ENCODE measurements at regions of chr6 and their contacts with region 1.

Region 1: DNA sequence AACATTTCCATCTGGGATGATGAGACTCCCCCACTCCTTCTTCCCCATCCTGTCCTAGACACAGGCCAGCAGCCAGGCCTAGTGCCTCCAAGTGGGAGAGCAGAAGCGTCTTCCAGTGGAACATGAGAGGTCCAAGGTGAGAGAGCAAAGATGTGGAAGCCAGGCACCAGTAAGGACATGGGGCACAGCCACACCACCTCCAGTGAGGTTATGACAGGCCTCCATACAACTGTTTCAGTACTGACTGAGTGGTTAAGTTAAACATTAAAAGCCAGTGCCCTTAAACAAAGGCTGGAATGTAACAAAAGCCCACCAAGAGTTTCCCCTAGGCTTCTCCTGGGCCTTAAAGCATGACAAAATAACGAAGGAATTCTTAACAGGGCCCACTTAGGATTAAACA is 5.3 kb downstream of the ZBTB24 start:
- DNase-seq: no peak
- H3K4me3 ChIP-seq: peak overlapping the region; percentile 96
- H3K27ac ChIP-seq: no peak overlapping the region
- H3K4me1 ChIP-seq: peaks cover 74% of the 10 kb centered on the region
- CTCF ChIP-seq: no peak

Region 2: DNA sequence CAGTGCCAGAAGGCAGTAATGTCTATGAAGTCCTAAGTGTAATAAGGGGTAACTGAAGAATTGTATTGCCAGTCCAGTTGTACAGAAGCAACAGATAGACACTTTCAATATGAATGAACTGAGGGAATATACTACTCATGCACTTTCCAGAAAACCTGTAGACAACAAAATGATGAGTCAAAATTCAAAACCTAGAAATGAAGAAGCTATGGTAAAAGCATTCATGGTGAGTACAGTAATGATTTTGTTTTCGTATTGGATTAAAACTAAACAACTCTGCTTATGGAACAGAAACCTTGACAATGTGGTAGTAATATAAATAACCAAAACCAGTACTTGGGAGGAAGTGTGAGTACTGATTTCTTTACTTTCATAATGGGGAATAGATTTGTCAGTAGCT is 594.6 kb before region 1 on chr6:
- CTCF ChIA-PET with region 1: no interaction called
- POLR2A ChIA-PET with region 1: no interaction called
- intact Hi-C with region 1: no loop called
- DNase-seq: no peak
- H3K4me3 ChIP-seq: no peak overlapping the region
- H3K27ac ChIP-seq: no peak overlapping the region
- H3K4me1 ChIP-seq: peaks cover 20% of the 10 kb centered on the region
- CTCF ChIP-seq: no peak

Region 3: GRCh38 chr6:109009236-109009961 is 468.3 kb before region 1 on chr6:
- CTCF ChIA-PET with region 1: no interaction called
- POLR2A ChIA-PET with region 1: no interaction called
- intact Hi-C with region 1: no loop called
- DNase-seq: peak; percentile 92
- H3K4me3 ChIP-seq: peak overlapping the region; percentile 87
- H3K27ac ChIP-seq: no peak overlapping the region
- H3K4me1 ChIP-seq: peaks cover 36% of the 10 kb centered on the region
- CTCF ChIP-seq: no peak

Region 4: DNA sequence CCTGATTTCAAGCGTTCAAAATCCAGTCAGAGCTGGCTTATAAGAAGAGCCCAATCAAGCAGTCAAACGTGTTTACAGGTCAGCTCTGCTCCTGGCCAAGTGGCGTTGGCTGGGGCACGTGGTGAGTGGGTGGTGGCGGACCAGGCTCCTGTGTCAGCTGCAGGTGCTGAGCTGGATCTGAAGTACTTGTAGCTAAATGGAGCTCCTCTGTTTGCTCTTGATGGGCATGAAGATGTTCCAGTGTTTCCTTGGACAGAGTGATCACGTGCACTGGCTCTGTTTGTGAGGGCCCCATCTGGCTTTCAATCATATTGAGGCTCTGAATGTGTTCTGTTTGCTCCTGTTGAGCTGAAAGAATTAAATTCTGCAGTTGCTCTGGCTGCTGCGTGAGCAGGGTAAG is 12.0 kb before region 1 on chr6:
- CTCF ChIA-PET with region 1: interaction called, 3 read pairs
- POLR2A ChIA-PET with region 1: interaction called, 19 read pairs
- intact Hi-C with region 1: no loop called
- DNase-seq: no peak
- H3K4me3 ChIP-seq: no peak overlapping the region
- H3K27ac ChIP-seq: no peak overlapping the region
- H3K4me1 ChIP-seq: peaks cover 18% of the 10 kb centered on the region
- CTCF ChIP-seq: no peak

Region 5: DNA sequence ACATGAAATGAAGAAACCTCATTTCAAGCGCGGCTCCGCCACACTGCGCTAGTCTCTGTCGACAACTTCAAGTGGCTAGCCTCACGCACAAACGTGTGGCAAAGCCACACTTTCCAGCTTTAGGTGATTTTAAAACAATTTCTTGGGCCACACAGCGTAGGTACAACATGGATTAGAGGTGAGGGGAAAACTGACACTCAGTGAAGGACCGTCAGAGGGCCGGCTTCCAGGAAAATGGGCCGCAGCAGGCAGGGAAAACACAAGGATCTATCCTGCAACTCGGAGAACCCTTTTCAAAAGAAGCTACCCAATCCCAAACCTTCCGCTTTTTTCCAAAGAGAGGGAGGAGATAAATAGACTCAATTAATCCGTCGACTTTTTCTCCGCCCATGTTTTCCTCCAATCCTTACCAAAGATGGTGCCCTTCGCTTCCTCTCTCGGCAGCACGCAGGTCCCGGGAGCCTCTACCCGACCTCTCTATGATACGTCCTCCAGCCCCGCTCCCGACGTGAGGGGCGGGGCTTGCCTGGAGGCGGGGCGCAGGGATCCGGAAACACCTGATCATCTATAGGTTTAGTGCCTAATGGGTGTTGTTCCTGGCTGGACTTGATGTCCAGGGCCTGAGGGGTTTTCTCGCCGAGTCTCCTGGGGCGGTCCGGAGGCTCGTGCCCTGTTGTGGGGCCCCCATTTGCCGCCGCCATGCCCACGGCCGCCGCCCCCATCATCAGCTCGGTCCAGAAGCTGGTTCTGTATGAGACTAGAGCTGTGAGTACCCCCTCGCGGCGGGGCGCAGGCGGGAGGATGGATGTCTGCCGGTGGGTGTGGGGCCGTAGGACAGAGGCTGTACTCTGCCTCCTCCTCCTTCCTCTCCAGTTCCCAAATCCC is 213.3 kb after region 1 on chr6 and contains the starts of genes AK9 and FIG4:
- CTCF ChIA-PET with region 1: no interaction called
- POLR2A ChIA-PET with region 1: no interaction called
- intact Hi-C with region 1: no loop called
- DNase-seq: peak; percentile 92
- H3K4me3 ChIP-seq: peak within 1 kb of the TSS; percentile 93
- H3K27ac ChIP-seq: peak within 1 kb of the TSS; percentile 31
- H3K4me1 ChIP-seq: peaks cover 27% of the 10 kb centered on the region
- CTCF ChIP-seq: peak; percentile 57
- total RNA-seq, gene AK9: 2.0 and 6.7 TPM in 2 replicates
- total RNA-seq, gene FIG4: 10.4 and 13.3 TPM in 2 replicates

Measured in OCI-LY7 (cell line).